Activated T-helper 2 cell treated with anti-CD3 and anti-CD28 coated beads, Interferon-gamma antibody, Interleukin-2, Interleukin-4, amounts not matched to agents 10 μg/mL and 5 μg/mL and 100 μg/mL, durations not matched to agents 14 hours and 24 hours and 36 hours (primary cell): ENCODE measurements at regions of chr2 and their contacts with region 1.

Region 1: GRCh38 chr2:173134703-173135102 is 59.1 kb downstream of the MAP3K20 start:
- DNase-seq: no peak
- H3K4me3 Mint-ChIP-seq: no peak overlapping the region
- H3K27ac Mint-ChIP-seq: peak overlapping the region; percentile 74
- H3K4me1 Mint-ChIP-seq: peaks cover 73% of the 10 kb centered on the region
- H3K27me3 Mint-ChIP-seq: peaks cover 5% of the 10 kb centered on the region

Region 2: GRCh38 chr2:173048897-173049661 is 85.6 kb before region 1 on chr2:
- intact Hi-C with region 1: loop called (anchors 1 kb)
- DNase-seq: no peak
- H3K4me3 Mint-ChIP-seq: no peak overlapping the region
- H3K27ac Mint-ChIP-seq: no peak overlapping the region
- H3K4me1 Mint-ChIP-seq: peaks cover 14% of the 10 kb centered on the region
- H3K27me3 Mint-ChIP-seq: peaks cover 31% of the 10 kb centered on the region

Region 3: GRCh38 chr2:173075781-173076580 is 58.7 kb before region 1 on chr2 and contains the start of gene MAP3K20:
- intact Hi-C with region 1: loop called (anchors 2 kb)
- DNase-seq: peak; percentile 44
- H3K4me3 Mint-ChIP-seq: peak within 1 kb of the TSS; percentile 82
- H3K27ac Mint-ChIP-seq: peak within 1 kb of the TSS; percentile 75
- H3K4me1 Mint-ChIP-seq: peaks cover 29% of the 10 kb centered on the region
- H3K27me3 Mint-ChIP-seq: peaks cover 30% of the 10 kb centered on the region
- total RNA-seq, gene MAP3K20: 26.5 and 26.8 TPM in 2 replicates

Region 4: GRCh38 chr2:173101687-173102086 is 33.0 kb before region 1 on chr2:
- intact Hi-C with region 1: loop called (anchors 1 kb)
- DNase-seq: no peak
- H3K4me3 Mint-ChIP-seq: no peak overlapping the region
- H3K27ac Mint-ChIP-seq: peak overlapping the region; percentile 38
- H3K4me1 Mint-ChIP-seq: peaks cover 51% of the 10 kb centered on the region
- H3K27me3 Mint-ChIP-seq: no peaks in the 10 kb centered on the region

Region 5: DNA sequence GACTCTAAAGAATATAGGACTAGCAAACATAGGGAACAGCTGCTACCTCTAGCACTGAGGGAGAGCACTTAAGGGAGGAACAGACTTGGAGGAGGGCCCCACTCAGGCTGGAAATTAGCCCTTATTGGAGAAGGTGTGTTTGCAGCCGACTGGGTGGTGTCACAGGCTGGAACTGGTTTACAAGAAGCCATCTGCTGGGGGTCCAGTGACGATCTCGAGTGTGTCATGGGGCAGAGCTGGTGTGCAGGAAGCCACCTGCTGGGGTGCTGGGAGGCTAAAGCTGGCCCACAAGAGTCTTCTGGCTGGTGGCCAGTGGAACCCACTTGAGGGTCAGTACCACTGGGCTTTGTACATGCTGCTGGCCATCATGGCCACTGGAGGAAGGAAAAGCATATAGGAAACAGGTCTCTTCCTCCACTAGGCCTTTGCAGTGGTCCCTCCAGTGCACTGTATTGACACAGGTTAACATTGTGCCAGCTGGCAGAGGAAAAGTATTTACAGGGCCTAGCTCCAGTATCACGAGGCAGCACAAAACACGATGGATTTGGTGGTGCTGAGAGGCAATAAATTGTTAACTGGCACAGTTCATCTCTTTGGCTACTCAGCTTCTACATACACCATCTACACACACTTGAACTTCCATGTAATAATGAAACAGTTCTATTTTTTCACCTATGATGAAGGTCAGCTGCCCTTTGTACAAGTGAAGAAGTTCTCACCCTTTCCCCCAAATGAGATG is 15.5 kb before region 1 on chr2:
- intact Hi-C with region 1: loop called (anchors 2 kb)
- DNase-seq: no peak
- H3K4me3 Mint-ChIP-seq: no peak overlapping the region
- H3K27ac Mint-ChIP-seq: peak overlapping the region; percentile 9
- H3K4me1 Mint-ChIP-seq: peaks cover 9% of the 10 kb centered on the region
- H3K27me3 Mint-ChIP-seq: peaks cover 2% of the 10 kb centered on the region

Region 6: GRCh38 chr2:173151671-173152398 is 17.1 kb after region 1 on chr2:
- intact Hi-C with region 1: loop called (anchors 1 kb)
- DNase-seq: no peak
- H3K4me3 Mint-ChIP-seq: no peak overlapping the region
- H3K27ac Mint-ChIP-seq: peak overlapping the region; percentile 41
- H3K4me1 Mint-ChIP-seq: peaks cover 54% of the 10 kb centered on the region
- H3K27me3 Mint-ChIP-seq: no peaks in the 10 kb centered on the region

Region 7: DNA sequence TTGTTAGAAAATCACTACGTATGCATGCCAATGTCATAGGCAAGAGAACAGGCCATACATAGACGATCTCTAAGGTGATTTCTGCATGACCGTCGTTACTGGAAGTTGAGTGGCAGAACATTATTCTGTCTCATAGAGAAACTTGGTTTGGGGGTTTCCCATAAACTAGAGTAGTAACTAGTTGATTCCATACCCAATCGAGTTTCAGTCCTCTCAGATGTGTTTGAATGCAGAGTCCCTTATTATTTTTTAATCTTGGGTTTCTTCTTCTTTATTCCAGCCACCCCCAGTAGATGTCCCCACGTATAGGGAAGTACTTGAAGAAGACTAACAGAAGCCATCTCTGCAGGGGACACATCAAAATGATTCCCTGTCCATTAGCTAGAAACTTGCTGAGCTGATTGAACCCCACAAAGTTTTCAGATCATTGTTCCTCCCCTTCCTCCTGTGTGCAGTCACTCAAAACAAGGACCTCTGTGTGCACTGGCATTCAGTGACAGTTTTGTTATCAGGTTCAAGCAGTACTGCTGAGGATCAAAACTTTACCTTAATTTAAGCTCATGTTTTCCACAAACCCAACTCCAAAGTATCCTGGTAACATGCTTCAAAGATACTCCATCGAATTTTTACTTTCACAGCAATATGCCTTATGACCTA is 151.6 kb after region 1 on chr2:
- intact Hi-C with region 1: loop called (anchors 5 kb)
- DNase-seq: no peak
- H3K4me3 Mint-ChIP-seq: no peak overlapping the region
- H3K27ac Mint-ChIP-seq: peak overlapping the region; percentile 35
- H3K4me1 Mint-ChIP-seq: peaks cover 19% of the 10 kb centered on the region
- H3K27me3 Mint-ChIP-seq: peaks cover 2% of the 10 kb centered on the region

Region 8: GRCh38 chr2:173898178-173898668 is 763.5 kb after region 1 on chr2:
- intact Hi-C with region 1: no loop called
- DNase-seq: no peak
- H3K4me3 Mint-ChIP-seq: no peak overlapping the region
- H3K27ac Mint-ChIP-seq: no peak overlapping the region
- H3K4me1 Mint-ChIP-seq: peaks cover 20% of the 10 kb centered on the region
- H3K27me3 Mint-ChIP-seq: no peaks in the 10 kb centered on the region